ENCODE measurements at regions of chr5 and their contacts with region 1.

Region 1: DNA sequence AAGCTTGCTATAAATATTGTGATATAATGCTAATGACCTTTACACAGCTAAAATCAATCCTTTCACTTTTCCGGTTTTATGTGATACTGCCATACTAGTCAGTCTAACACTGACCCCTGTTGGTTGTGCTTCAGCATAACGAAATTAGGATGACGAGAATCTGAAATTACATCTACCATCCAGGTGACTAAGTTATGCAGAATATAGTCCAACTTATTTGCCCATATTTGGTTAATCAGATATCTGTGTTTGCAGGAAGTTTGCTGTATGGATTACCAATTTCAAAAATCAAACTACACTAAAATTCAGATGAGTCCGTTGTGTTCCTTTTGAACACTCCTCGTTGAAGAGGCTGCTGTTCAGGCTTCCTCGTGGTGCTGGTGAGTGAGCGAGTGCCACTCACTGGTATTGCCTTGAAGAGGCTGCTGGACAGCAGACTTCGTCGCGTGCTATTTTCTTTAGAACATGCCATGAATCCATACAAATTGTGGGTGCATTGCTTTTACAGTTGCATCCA is 32.5 kb downstream of the TENT4A start:
- DNase-seq: peak in 4 of 9 experiments; percentile 26 to 71 (median 46)
- ATAC-seq: peak; percentile 75
- H3K4me3 ChIP-seq: no peak overlapping the region
- H3K4me3 Mint-ChIP-seq: no peak overlapping the region
- H3K27ac ChIP-seq: no peak overlapping the region
- H3K27ac Mint-ChIP-seq: no peak overlapping the region
- H3K4me1 ChIP-seq: no peaks in the 10 kb centered on the region
- H3K4me1 Mint-ChIP-seq: peaks cover 3% of the 10 kb centered on the region
- H3K27me3 ChIP-seq: no peaks in the 10 kb centered on the region
- H3K27me3 Mint-ChIP-seq: no peaks in the 10 kb centered on the region
- CTCF ChIP-seq: peak; percentile 94

Region 2: GRCh38 chr5:5141625-5142532 is 1603.9 kb before region 1 on chr5:
- CTCF ChIA-PET with region 1: no interaction called
- POLR2A ChIA-PET with region 1: no interaction called
- intact Hi-C with region 1: loop called in 1 of 2 experiments (anchors 1 kb)
- DNase-seq: peak in 6 of 9 experiments; percentile 23 to 68 (median 56)
- ATAC-seq: no peak
- H3K4me3 ChIP-seq: no peak overlapping the region
- H3K4me3 Mint-ChIP-seq: no peak overlapping the region
- H3K27ac ChIP-seq: no peak overlapping the region
- H3K27ac Mint-ChIP-seq: no peak overlapping the region
- H3K4me1 ChIP-seq: no peaks in the 10 kb centered on the region
- H3K4me1 Mint-ChIP-seq: peaks cover 8% of the 10 kb centered on the region
- H3K27me3 ChIP-seq: peaks cover 2 to 8% of the 10 kb centered on the region in 2 experiments
- H3K27me3 Mint-ChIP-seq: peaks cover 26% of the 10 kb centered on the region
- CTCF ChIP-seq: peak; percentile 95

Region 3: DNA sequence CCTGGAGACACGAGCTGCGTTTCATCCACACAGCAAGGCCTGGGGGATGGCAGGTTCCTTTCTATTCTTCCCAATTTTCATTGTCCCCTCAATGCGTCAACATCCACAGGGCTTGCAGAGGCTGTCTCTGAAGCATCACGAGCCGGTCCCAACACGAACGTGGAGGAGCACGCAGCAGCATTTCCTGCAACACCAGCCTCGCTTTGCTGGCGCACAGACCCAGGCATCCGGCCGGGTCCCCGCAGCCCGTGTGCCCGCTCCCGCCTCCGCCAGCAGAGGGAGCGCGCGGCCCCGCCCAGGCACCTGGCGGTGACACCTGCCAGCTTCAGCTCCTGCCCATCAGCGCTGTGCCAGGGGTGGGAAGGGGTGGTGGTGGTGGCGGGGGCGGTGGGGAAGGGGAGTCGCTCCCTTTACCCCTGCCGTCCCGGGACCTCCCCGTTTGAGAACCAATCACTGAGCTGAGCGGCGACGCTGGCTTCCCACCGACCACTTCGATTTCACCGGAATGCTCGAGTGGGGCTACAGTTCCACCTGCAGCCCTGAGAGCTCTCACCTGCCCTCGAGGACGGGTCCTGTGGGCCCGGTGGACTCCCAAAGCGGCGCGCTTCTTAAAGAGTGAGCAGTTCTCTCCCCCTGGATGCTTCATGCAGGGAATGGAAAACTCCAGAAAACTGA is 858.8 kb before region 1 on chr5:
- CTCF ChIA-PET with region 1: no interaction called
- POLR2A ChIA-PET with region 1: no interaction called
- intact Hi-C with region 1: loop called in 1 of 2 experiments (anchors 5 kb)
- DNase-seq: peak in 3 of 9 experiments; percentile 12 to 22 (median 15)
- ATAC-seq: no peak
- H3K4me3 ChIP-seq: no peak overlapping the region
- H3K4me3 Mint-ChIP-seq: no peak overlapping the region
- H3K27ac ChIP-seq: no peak overlapping the region
- H3K27ac Mint-ChIP-seq: no peak overlapping the region
- H3K4me1 ChIP-seq: no peaks in the 10 kb centered on the region
- H3K4me1 Mint-ChIP-seq: no peaks in the 10 kb centered on the region
- H3K27me3 ChIP-seq: peaks cover 0 to 4% of the 10 kb centered on the region in 2 experiments
- H3K27me3 Mint-ChIP-seq: peaks cover 9% of the 10 kb centered on the region
- CTCF ChIP-seq: no peak

Region 4: GRCh38 chr5:6377905-6378765 is 367.6 kb before region 1 on chr5 and contains the start of gene MED10:
- CTCF ChIA-PET with region 1: no interaction called
- POLR2A ChIA-PET with region 1: no interaction called
- intact Hi-C with region 1: loop called in 1 of 2 experiments (anchors 10 kb)
- DNase-seq: peak; percentile 90 to 96 (median 95)
- ATAC-seq: peak; percentile 97
- H3K4me3 ChIP-seq: peak within 1 kb of the TSS; percentile 56 to 95
- H3K4me3 Mint-ChIP-seq: peak within 1 kb of the TSS; percentile 99
- H3K27ac ChIP-seq: peak within 1 kb of the TSS; percentile 77 to 90
- H3K27ac Mint-ChIP-seq: peak within 1 kb of the TSS; percentile 98
- H3K4me1 ChIP-seq: peaks cover 31% of the 10 kb centered on the region
- H3K4me1 Mint-ChIP-seq: peaks cover 47% of the 10 kb centered on the region
- H3K27me3 ChIP-seq: no peaks in the 10 kb centered on the region
- H3K27me3 Mint-ChIP-seq: no peaks in the 10 kb centered on the region
- CTCF ChIP-seq: no peak
- total RNA-seq, gene MED10: 110 to 112 TPM

Region 5: DNA sequence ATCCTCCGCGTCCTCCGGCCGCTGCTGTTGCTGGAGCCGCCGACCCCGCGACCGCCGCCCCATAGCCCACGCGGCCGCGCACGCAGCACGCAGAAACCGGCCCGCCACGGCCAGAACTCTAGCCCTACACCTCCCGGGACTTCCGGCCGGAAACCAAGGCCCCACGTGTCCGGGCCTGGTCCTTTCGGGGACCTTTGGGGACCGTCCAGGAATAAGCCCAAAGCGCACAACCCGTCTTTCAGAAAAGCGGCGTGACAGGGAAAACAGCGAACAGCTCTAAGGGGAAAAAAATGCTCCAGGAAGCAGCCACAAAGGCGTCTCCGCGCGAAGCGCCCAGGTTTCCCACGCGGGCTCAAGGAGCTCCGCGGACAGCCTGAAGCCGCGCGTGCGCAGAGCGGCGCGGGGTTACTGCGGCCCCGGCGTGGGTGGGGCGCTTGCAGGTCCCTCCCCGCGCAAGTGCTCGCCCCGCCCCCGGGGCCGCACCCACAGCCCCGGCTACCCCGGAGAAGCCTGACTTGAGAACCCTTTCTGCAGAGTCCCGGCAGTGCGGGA is 112.8 kb before region 1 on chr5 and contains the starts of genes NSUN2 and SRD5A1:
- CTCF ChIA-PET with region 1: interaction called, 5 read pairs
- POLR2A ChIA-PET with region 1: no interaction called
- intact Hi-C with region 1: loop called (anchors 1 kb)
- DNase-seq: peak; percentile 81 to 98 (median 90)
- ATAC-seq: peak; percentile 89
- H3K4me3 ChIP-seq: peak within 1 kb of the TSS; percentile 75 to 83
- H3K4me3 Mint-ChIP-seq: peak within 1 kb of the TSS; percentile 85
- H3K27ac ChIP-seq: peak within 1 kb of the TSS; percentile 92 to 100
- H3K27ac Mint-ChIP-seq: peak within 1 kb of the TSS; percentile 99
- H3K4me1 ChIP-seq: peaks cover 22% of the 10 kb centered on the region
- H3K4me1 Mint-ChIP-seq: peaks cover 52% of the 10 kb centered on the region
- H3K27me3 ChIP-seq: no peaks in the 10 kb centered on the region
- H3K27me3 Mint-ChIP-seq: no peaks in the 10 kb centered on the region
- CTCF ChIP-seq: no peak
- total RNA-seq, gene NSUN2: 69.6 to 74.3 TPM
- total RNA-seq, gene SRD5A1: 2.1 to 2.8 TPM

Region 6: GRCh38 chr5:6728011-6728794 is 17.6 kb before region 1 on chr5:
- CTCF ChIA-PET with region 1: interaction called, 10 read pairs
- POLR2A ChIA-PET with region 1: no interaction called
- intact Hi-C with region 1: no loop called
- DNase-seq: no peak
- ATAC-seq: no peak
- H3K4me3 ChIP-seq: no peak overlapping the region
- H3K4me3 Mint-ChIP-seq: no peak overlapping the region
- H3K27ac ChIP-seq: no peak overlapping the region
- H3K27ac Mint-ChIP-seq: peak overlapping the region; percentile 78
- H3K4me1 ChIP-seq: peaks cover 56% of the 10 kb centered on the region
- H3K4me1 Mint-ChIP-seq: peaks cover 85% of the 10 kb centered on the region
- H3K27me3 ChIP-seq: no peaks in the 10 kb centered on the region
- H3K27me3 Mint-ChIP-seq: no peaks in the 10 kb centered on the region
- CTCF ChIP-seq: no peak

Region 7: GRCh38 chr5:6762116-6762515 is 16.4 kb after region 1 on chr5:
- CTCF ChIA-PET with region 1: no interaction called
- POLR2A ChIA-PET with region 1: no interaction called
- intact Hi-C with region 1: no loop called
- DNase-seq: no peak
- ATAC-seq: no peak
- H3K4me3 ChIP-seq: no peak overlapping the region
- H3K4me3 Mint-ChIP-seq: no peak overlapping the region
- H3K27ac ChIP-seq: no peak overlapping the region
- H3K27ac Mint-ChIP-seq: no peak overlapping the region
- H3K4me1 ChIP-seq: no peaks in the 10 kb centered on the region
- H3K4me1 Mint-ChIP-seq: peaks cover 2% of the 10 kb centered on the region
- H3K27me3 ChIP-seq: no peaks in the 10 kb centered on the region
- H3K27me3 Mint-ChIP-seq: no peaks in the 10 kb centered on the region
- CTCF ChIP-seq: no peak

Region 8: GRCh38 chr5:7105358-7105757 is 359.6 kb after region 1 on chr5:
- CTCF ChIA-PET with region 1: no interaction called
- POLR2A ChIA-PET with region 1: no interaction called
- intact Hi-C with region 1: no loop called
- DNase-seq: no peak
- ATAC-seq: no peak
- H3K4me3 ChIP-seq: no peak overlapping the region
- H3K4me3 Mint-ChIP-seq: no peak overlapping the region
- H3K27ac ChIP-seq: no peak overlapping the region
- H3K27ac Mint-ChIP-seq: no peak overlapping the region
- H3K4me1 ChIP-seq: no peaks in the 10 kb centered on the region
- H3K4me1 Mint-ChIP-seq: no peaks in the 10 kb centered on the region
- H3K27me3 ChIP-seq: no peaks in the 10 kb centered on the region
- H3K27me3 Mint-ChIP-seq: no peaks in the 10 kb centered on the region
- CTCF ChIP-seq: no peak